ENCODE measurements at regions of chr6 and their contacts with region 1.

Region 1: GRCh38 chr6:110784610-110784979 is 30.7 kb downstream of the CDK19 start:
- DNase-seq: no peak
- ATAC-seq: no peak
- H3K4me3 ChIP-seq: no peak overlapping the region
- H3K4me3 Mint-ChIP-seq: no peak overlapping the region
- H3K27ac ChIP-seq: no peak overlapping the region
- H3K27ac Mint-ChIP-seq: no peak overlapping the region
- H3K4me1 ChIP-seq: peaks cover 0 to 7% of the 10 kb centered on the region in 2 experiments
- H3K4me1 Mint-ChIP-seq: peaks cover 29 to 38% (median 31%) of the 10 kb centered on the region in 3 donors
- H3K27me3 ChIP-seq: no peaks in the 10 kb centered on the region
- H3K27me3 Mint-ChIP-seq: no peaks in the 10 kb centered on the region

Region 2: GRCh38 chr6:110708295-110708950 is 76.2 kb before region 1 on chr6:
- CTCF ChIA-PET with region 1: no interaction called
- POLR2A ChIA-PET with region 1: no interaction called
- DNase-seq: no peak
- ATAC-seq: no peak
- H3K4me3 ChIP-seq: no peak overlapping the region
- H3K4me3 Mint-ChIP-seq: no peak overlapping the region
- H3K27ac ChIP-seq: no peak overlapping the region
- H3K27ac Mint-ChIP-seq: no peak overlapping the region
- H3K4me1 ChIP-seq: no peaks in the 10 kb centered on the region
- H3K4me1 Mint-ChIP-seq: peaks cover 0 to 2% (median 0%) of the 10 kb centered on the region in 3 donors
- H3K27me3 ChIP-seq: no peaks in the 10 kb centered on the region
- H3K27me3 Mint-ChIP-seq: no peaks in the 10 kb centered on the region

Region 3: GRCh38 chr6:110728501-110728900 is 56.1 kb before region 1 on chr6:
- CTCF ChIA-PET with region 1: no interaction called
- POLR2A ChIA-PET with region 1: no interaction called
- DNase-seq: no peak
- ATAC-seq: no peak
- H3K4me3 ChIP-seq: no peak overlapping the region
- H3K4me3 Mint-ChIP-seq: no peak overlapping the region
- H3K27ac ChIP-seq: no peak overlapping the region
- H3K27ac Mint-ChIP-seq: no peak overlapping the region
- H3K4me1 ChIP-seq: no peaks in the 10 kb centered on the region
- H3K4me1 Mint-ChIP-seq: peaks cover 0 to 8% (median 1%) of the 10 kb centered on the region in 3 donors
- H3K27me3 ChIP-seq: no peaks in the 10 kb centered on the region
- H3K27me3 Mint-ChIP-seq: no peaks in the 10 kb centered on the region

Region 4: DNA sequence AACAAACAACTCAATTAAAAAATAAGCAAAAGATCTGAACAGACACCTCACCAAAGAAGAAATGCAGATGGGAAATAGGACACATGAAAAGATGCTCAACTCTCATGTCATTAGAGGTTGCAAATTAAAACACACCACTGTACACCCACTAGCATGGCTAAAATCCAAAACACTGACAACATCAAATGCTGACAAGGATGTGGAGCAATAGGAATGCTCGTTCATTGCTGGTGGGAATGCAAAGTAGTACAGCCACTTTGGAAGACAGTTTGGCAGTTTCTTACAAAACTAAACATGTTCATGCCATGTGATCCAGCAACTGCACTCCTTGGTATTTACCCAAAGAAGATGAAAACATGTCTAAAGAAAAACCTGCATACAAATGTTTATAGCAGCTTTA is 16.5 kb before region 1 on chr6:
- CTCF ChIA-PET with region 1: no interaction called
- POLR2A ChIA-PET with region 1: interaction called, 3 to 11 read pairs
- DNase-seq: no peak
- ATAC-seq: no peak
- H3K4me3 ChIP-seq: no peak overlapping the region
- H3K4me3 Mint-ChIP-seq: no peak overlapping the region
- H3K27ac ChIP-seq: no peak overlapping the region
- H3K27ac Mint-ChIP-seq: no peak overlapping the region
- H3K4me1 ChIP-seq: no peaks in the 10 kb centered on the region
- H3K4me1 Mint-ChIP-seq: no peaks in the 10 kb centered on the region
- H3K27me3 ChIP-seq: no peaks in the 10 kb centered on the region
- H3K27me3 Mint-ChIP-seq: no peaks in the 10 kb centered on the region

Region 5: DNA sequence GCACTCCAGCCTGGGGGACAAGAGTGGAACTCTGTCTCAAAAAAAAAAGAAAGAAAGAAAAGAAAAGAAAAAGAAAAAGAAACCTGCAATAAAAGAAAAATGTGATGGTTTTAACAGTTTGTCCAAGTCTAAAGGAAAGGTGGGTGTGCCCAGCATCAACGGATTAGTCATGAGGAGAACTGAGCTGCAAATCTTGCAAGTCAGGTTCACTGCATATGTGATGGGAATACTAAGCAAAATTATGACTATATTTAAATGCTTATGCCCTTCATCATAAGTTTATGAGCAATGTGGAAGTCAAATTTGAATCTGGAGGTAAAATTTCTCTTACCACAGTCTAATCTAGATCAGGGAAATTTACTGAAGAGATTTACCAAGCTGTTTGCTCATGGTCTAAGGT is 43.8 kb after region 1 on chr6:
- CTCF ChIA-PET with region 1: no interaction called
- POLR2A ChIA-PET with region 1: no interaction called
- DNase-seq: no peak
- ATAC-seq: no peak
- H3K4me3 ChIP-seq: no peak overlapping the region
- H3K4me3 Mint-ChIP-seq: no peak overlapping the region
- H3K27ac ChIP-seq: no peak overlapping the region
- H3K27ac Mint-ChIP-seq: no peak overlapping the region
- H3K4me1 ChIP-seq: no peaks in the 10 kb centered on the region
- H3K4me1 Mint-ChIP-seq: no peaks in the 10 kb centered on the region
- H3K27me3 ChIP-seq: no peaks in the 10 kb centered on the region
- H3K27me3 Mint-ChIP-seq: no peaks in the 10 kb centered on the region

Region 6: GRCh38 chr6:111011360-111012142 is 227.0 kb after region 1 on chr6:
- CTCF ChIA-PET with region 1: no interaction called
- POLR2A ChIA-PET with region 1: interaction called in 1 of 2 experiments, 11 read pairs
- DNase-seq: peak in 4 of 35 experiments; percentile 3 to 64 (median 10)
- ATAC-seq: peak in 3 of 4 experiments; percentile 34 to 55 (median 45)
- H3K4me3 ChIP-seq: no peak overlapping the region
- H3K4me3 Mint-ChIP-seq: no peak overlapping the region
- H3K27ac ChIP-seq: no peak overlapping the region
- H3K27ac Mint-ChIP-seq: no peak overlapping the region
- H3K4me1 ChIP-seq: no peaks in the 10 kb centered on the region
- H3K4me1 Mint-ChIP-seq: peaks cover 4 to 8% (median 6%) of the 10 kb centered on the region in 3 donors
- H3K27me3 ChIP-seq: no peaks in the 10 kb centered on the region
- H3K27me3 Mint-ChIP-seq: no peaks in the 10 kb centered on the region